ENCODE measurements at regions of chr19 and their contacts with region 1.

Region 1: GRCh38 chr19:51473009-51473707 is 5.2 kb upstream of the CEACAM18 start:
- DNase-seq: peak; percentile 50
- H3K4me3 ChIP-seq: no peak overlapping the region
- H3K27ac ChIP-seq: no peak overlapping the region
- H3K4me1 ChIP-seq: peaks cover 11% of the 10 kb centered on the region
- H3K27me3 ChIP-seq: no peaks in the 10 kb centered on the region
- CTCF ChIP-seq: peak; percentile 83

Region 2: DNA sequence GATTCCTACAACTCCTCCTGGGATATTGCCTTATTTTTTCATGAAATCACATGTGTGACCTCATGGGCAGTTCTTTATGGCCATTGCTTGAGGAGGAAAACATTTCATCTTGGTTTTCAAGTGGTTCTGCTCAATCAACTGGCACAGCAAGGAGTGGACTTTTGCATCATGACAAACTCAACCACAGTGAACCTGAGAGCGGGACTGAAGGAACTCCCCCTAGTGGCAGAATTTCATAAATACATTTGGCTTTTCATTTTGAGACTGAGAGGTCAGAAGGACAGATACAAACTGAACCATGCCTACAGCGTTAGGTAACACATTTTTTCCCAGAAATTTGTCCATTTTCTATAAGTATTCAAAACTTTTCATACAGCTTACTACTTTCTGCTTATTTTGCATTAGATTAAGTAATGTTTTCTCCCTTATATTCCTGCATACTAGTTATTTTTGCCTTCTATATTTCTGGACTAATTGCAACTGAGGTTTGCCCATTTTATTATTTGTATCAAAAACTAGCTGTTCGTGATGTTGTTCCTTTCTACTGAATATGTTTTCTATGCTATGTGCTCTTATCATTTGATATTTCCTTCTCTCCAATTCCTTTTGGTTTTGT is 41.8 kb after region 1 on chr19:
- CTCF ChIA-PET with region 1: no interaction called
- dilution Hi-C with region 1: no loop called
- in situ Hi-C with region 1: no loop called
- intact Hi-C with region 1: loop called (anchors 1 kb)
- DNase-seq: peak; percentile 39
- H3K4me3 ChIP-seq: no peak overlapping the region
- H3K27ac ChIP-seq: no peak overlapping the region
- H3K4me1 ChIP-seq: no peaks in the 10 kb centered on the region
- H3K27me3 ChIP-seq: no peaks in the 10 kb centered on the region
- CTCF ChIP-seq: peak; percentile 75 to 79

Region 3: GRCh38 chr19:51637362-51637978 is 164.3 kb after region 1 on chr19:
- CTCF ChIA-PET with region 1: no interaction called
- dilution Hi-C with region 1: no loop called
- in situ Hi-C with region 1: no loop called
- intact Hi-C with region 1: loop called (anchors 5 kb)
- DNase-seq: no peak
- H3K4me3 ChIP-seq: no peak overlapping the region
- H3K27ac ChIP-seq: no peak overlapping the region
- H3K4me1 ChIP-seq: no peaks in the 10 kb centered on the region
- H3K27me3 ChIP-seq: no peaks in the 10 kb centered on the region
- CTCF ChIP-seq: peak; percentile 51 to 66

Region 4: GRCh38 chr19:51660975-51661600 is 187.9 kb after region 1 on chr19:
- CTCF ChIA-PET with region 1: interaction called, 9 read pairs
- dilution Hi-C with region 1: no loop called
- in situ Hi-C with region 1: loop called (anchors 10 to 25 kb)
- intact Hi-C with region 1: loop called (anchors 1 kb)
- DNase-seq: peak; percentile 55
- H3K4me3 ChIP-seq: no peak overlapping the region
- H3K27ac ChIP-seq: no peak overlapping the region
- H3K4me1 ChIP-seq: peaks cover 5% of the 10 kb centered on the region
- H3K27me3 ChIP-seq: no peaks in the 10 kb centered on the region
- CTCF ChIP-seq: peak; percentile 67 to 81

Region 5: GRCh38 chr19:51783372-51783771 is 310.2 kb after region 1 on chr19:
- CTCF ChIA-PET with region 1: no interaction called
- dilution Hi-C with region 1: no loop called
- in situ Hi-C with region 1: loop called in 1 of 2 experiments (anchors 25 kb)
- intact Hi-C with region 1: loop called (anchors 1 kb)
- DNase-seq: peak; percentile 78
- H3K4me3 ChIP-seq: no peak overlapping the region
- H3K27ac ChIP-seq: no peak overlapping the region
- H3K4me1 ChIP-seq: peaks cover 12% of the 10 kb centered on the region
- H3K27me3 ChIP-seq: no peaks in the 10 kb centered on the region
- CTCF ChIP-seq: peak; percentile 44 to 60